ENCODE measurements at regions of chr11 and their contacts with region 1.

Region 1: GRCh38 chr11:113896156-113896879 is 8.3 kb upstream of the HTR3B start:
- DNase-seq: peak; percentile 34
- H3K4me3 ChIP-seq: no peak overlapping the region
- H3K27ac ChIP-seq: no peak overlapping the region
- H3K4me1 ChIP-seq: no peaks in the 10 kb centered on the region
- H3K27me3 ChIP-seq: peaks cover 3 to 4% of the 10 kb centered on the region in 2 experiments
- CTCF ChIP-seq: peak; percentile 72 to 76
- POLR2A ChIP-seq: no peak

Region 2: DNA sequence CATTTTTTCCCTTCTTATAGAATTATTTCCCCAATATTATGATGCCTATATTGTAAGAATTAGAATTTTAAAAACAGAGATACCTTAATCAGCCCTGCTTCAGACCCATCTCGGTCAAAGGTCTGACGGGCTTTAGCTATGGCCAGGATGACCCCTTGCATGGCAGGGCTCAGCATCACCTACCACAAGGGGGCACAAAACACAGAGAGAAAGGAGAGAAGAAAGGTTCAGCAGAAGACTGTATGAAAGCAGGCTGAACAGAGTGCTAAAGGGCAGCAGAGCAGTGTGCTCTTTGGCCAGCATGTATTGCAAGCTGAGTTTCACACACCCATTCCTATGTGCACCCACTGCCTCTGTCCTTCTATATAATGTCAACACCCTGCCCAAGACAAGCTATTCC is 89.9 kb before region 1 on chr11:
- CTCF ChIA-PET with region 1: interaction called, 13 read pairs
- POLR2A ChIA-PET with region 1: no interaction called
- dilution Hi-C with region 1: no loop called
- intact Hi-C with region 1: no loop called
- DNase-seq: peak; percentile 30
- H3K4me3 ChIP-seq: no peak overlapping the region
- H3K27ac ChIP-seq: no peak overlapping the region
- H3K4me1 ChIP-seq: no peaks in the 10 kb centered on the region
- H3K27me3 ChIP-seq: no peaks in the 10 kb centered on the region
- CTCF ChIP-seq: peak; percentile 35 to 65
- POLR2A ChIP-seq: no peak

Region 3: DNA sequence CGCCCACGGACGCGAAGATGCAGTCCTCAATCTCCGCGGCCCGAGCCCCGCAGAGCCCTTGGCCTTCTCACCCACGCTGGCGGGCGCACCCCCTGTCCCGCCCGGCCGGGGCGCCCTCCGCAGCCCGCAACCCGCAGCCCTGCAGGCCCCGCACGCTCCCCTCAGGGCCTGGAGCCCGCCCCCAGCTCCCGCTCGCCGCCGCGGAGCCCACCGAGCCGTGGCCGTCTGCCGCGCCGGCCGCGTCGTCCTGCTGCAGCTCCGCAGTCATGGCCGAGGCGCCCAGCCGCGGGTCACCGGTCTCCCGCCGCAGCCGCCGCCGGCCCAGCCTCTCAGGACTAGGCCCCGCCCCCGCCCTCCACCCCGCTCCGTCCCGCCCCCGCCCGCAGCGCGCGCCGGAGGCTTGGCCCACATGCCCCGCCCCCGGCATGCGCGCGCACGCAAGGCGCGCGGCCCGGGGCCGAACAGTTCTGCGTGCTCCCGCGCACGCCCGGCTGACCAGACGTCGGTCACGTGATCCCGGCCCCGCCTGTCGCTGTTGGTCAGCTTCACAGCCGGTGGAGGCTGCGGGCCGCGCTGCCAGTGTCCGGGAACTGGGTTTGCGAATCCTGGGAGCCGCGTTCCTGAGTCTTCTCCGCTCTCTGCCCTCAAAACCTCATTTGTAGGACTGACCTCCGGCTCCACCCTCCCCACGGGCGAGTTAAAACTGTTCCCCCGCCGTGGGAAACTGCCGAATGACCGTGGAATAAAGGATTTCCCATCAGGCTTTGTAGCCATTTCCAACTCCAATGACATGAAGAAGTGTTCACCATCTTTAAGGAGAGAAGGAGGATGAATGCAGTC is 20.9 kb before region 1 on chr11 and contains the start of gene USP28:
- CTCF ChIA-PET with region 1: interaction called, 14 read pairs
- POLR2A ChIA-PET with region 1: interaction called, 3 read pairs
- dilution Hi-C with region 1: no loop called
- intact Hi-C with region 1: no loop called
- DNase-seq: peak; percentile 95
- H3K4me3 ChIP-seq: peak within 1 kb of the TSS; percentile 47 to 94 (median 94)
- H3K27ac ChIP-seq: peak within 1 kb of the TSS; percentile 92
- H3K4me1 ChIP-seq: peaks cover 24% of the 10 kb centered on the region
- H3K27me3 ChIP-seq: no peaks in the 10 kb centered on the region
- CTCF ChIP-seq: no peak
- POLR2A ChIP-seq: peak; percentile 97
- total RNA-seq, gene USP28: 29.6 and 30.5 TPM in 2 replicates

Region 4: GRCh38 chr11:113884361-113884836 is 11.9 kb before region 1 on chr11:
- CTCF ChIA-PET with region 1: interaction called, 28 read pairs
- POLR2A ChIA-PET with region 1: no interaction called
- dilution Hi-C with region 1: no loop called
- intact Hi-C with region 1: no loop called
- DNase-seq: no peak
- H3K4me3 ChIP-seq: no peak overlapping the region
- H3K27ac ChIP-seq: no peak overlapping the region
- H3K4me1 ChIP-seq: no peaks in the 10 kb centered on the region
- H3K27me3 ChIP-seq: no peaks in the 10 kb centered on the region
- CTCF ChIP-seq: no peak
- POLR2A ChIP-seq: no peak

Region 5: DNA sequence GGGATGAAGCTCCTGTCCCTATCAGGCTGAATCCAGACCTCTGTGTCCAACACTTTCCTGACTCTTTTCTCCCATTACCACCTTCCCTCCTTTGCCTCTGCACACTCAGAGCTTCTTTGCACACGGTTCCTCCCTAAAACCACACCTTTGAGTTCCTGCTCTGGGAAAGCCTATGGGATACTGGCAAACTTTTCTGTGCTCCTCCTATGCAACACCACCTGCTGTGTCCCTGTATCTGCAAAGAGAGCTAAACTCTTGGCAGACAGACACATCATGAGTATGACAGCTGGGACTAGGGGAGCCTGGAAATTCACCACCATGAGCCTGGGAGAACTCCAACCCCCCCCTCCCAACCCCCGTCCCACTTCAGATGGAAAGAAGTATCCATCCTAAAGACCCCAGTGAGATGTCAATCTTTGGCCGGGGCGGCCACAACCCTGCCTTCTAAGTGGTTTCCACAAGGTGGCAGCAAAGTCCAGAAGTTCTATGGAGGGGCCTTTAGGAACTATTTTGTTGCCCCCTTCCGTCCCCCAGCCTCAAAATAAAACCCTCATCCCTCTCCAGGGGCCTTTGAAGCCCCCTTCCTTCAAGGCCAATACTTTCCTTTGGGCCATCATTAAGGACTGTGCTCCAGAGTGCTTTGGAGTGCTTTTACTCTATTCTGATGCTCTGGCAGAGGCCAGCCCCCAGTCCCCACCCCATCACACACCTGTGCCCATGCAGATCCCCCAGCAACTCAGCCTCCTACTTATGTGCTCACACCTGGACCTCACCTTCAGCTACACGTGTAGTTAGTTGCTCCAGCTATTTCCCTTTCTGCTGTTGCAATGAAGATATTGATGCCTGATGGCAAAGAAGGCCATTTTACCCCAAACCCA is 98.0 kb after region 1 on chr11:
- CTCF ChIA-PET with region 1: interaction called, 10 read pairs
- POLR2A ChIA-PET with region 1: no interaction called
- dilution Hi-C with region 1: no loop called
- intact Hi-C with region 1: loop called (anchors 5 kb)
- DNase-seq: peak; percentile 11
- H3K4me3 ChIP-seq: no peak overlapping the region
- H3K27ac ChIP-seq: no peak overlapping the region
- H3K4me1 ChIP-seq: no peaks in the 10 kb centered on the region
- H3K27me3 ChIP-seq: peaks cover 2 to 4% of the 10 kb centered on the region in 2 experiments
- CTCF ChIP-seq: peak; percentile 50 to 69
- POLR2A ChIP-seq: no peak

Region 6: GRCh38 chr11:114036156-114036811 is 140.0 kb after region 1 on chr11:
- CTCF ChIA-PET with region 1: no interaction called
- POLR2A ChIA-PET with region 1: no interaction called
- dilution Hi-C with region 1: no loop called
- intact Hi-C with region 1: loop called (anchors 1 kb)
- DNase-seq: peak; percentile 73
- H3K4me3 ChIP-seq: peak overlapping the region; percentile 30 to 46 (median 45)
- H3K27ac ChIP-seq: peak overlapping the region; percentile 56
- H3K4me1 ChIP-seq: peaks cover 15% of the 10 kb centered on the region
- H3K27me3 ChIP-seq: peaks cover 0 to 1% of the 10 kb centered on the region in 2 experiments
- CTCF ChIP-seq: peak; percentile 91 to 93
- POLR2A ChIP-seq: no peak

Region 7: DNA sequence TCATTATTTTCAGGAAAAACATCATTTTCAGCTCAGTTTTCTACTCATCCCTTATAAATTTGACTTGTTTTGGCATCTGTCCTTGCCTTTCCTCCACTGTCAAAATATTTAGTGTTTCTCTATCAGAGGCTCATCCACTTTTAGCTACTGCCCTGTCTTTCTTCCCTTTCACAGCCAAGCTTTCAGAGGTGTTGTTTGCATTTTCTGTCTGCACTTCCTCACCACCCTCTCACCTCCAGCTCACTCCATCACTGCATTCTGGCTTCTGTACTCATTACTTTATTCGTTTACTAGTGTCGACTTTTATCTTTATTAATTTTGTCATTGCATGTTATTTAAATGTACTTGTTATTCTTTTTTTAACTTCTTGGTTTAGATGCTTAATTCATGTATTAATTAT is 373.2 kb after region 1 on chr11:
- CTCF ChIA-PET with region 1: interaction called, 425 read pairs
- POLR2A ChIA-PET with region 1: no interaction called
- dilution Hi-C with region 1: no loop called
- intact Hi-C with region 1: no loop called
- DNase-seq: no peak
- H3K4me3 ChIP-seq: no peak overlapping the region
- H3K27ac ChIP-seq: no peak overlapping the region
- H3K4me1 ChIP-seq: no peaks in the 10 kb centered on the region
- H3K27me3 ChIP-seq: peaks cover 26 to 36% of the 10 kb centered on the region in 2 experiments
- CTCF ChIP-seq: no peak
- POLR2A ChIP-seq: no peak

Measured in endothelial cell of umbilical vein (primary cell).